AG04449 (cell line): ENCODE measurements at regions of chr22 and their contacts with region 1.

Region 1: GRCh38 chr22:39003165-39003638 is 10.9 kb upstream of the APOBEC3C start:
- DNase-seq: peak; percentile 26
- H3K4me3 ChIP-seq: no peak overlapping the region
- CTCF ChIP-seq: peak; percentile 74

Region 2: GRCh38 chr22:38973289-38974169 is 29.7 kb before region 1 on chr22:
- CTCF ChIA-PET with region 1: interaction called, 15 read pairs
- POLR2A ChIA-PET with region 1: no interaction called
- DNase-seq: no peak
- H3K4me3 ChIP-seq: no peak overlapping the region
- CTCF ChIP-seq: peak; percentile 75

Region 3: GRCh38 chr22:38981992-38982927 is 20.9 kb before region 1 on chr22 and contains the start of gene APOBEC3B:
- CTCF ChIA-PET with region 1: interaction called, 11 read pairs
- POLR2A ChIA-PET with region 1: no interaction called
- DNase-seq: peak; percentile 73
- H3K4me3 ChIP-seq: peak within 1 kb of the TSS; percentile 52
- CTCF ChIP-seq: no peak

Region 4: GRCh38 chr22:39117585-39118191 is 114.5 kb after region 1 on chr22:
- CTCF ChIA-PET with region 1: interaction called, 18 read pairs
- POLR2A ChIA-PET with region 1: no interaction called
- DNase-seq: no peak
- H3K4me3 ChIP-seq: no peak overlapping the region
- CTCF ChIP-seq: peak; percentile 38

Region 5: DNA sequence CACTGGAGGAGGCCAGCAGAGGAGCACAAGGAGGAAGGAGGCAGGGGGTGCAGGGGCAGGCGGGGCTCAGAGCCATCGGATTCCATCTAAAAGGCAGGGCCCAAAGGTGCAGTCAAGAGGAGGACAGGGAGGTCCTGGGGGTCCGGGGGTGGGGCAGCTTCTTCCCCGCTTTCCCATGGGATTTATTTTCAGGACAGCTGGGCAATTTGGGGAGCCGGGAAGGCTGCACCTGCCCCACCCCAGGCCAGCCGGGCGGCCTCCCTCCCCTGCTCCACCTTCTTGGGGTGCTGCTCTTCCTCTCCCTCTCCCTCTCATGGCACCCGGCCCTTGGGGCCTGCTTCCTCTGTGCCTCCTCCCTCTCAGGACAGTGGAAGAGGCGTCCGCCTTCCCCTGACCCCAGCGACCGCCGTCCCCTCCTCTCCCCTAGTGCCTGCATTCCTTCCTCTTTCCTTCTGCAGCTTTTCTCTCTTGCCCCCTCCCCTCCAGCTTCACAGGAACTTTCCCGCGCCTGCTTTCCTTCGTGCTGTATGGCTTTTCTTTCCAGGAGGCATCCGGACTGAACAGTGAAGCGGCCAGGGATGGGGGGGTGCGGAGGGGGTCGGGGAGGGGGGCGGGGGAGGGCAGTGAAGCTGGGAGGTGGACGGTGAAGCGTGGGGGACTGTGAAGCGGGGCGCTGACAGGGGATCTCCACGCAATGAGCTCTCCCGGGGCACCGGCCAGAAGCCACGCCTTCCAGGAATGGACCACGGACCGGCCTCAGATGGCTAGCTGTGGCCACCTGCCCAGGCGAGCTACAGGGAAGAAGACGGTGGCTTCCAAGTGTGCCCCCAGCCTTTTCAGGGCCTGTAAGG is 120.8 kb after region 1 on chr22:
- CTCF ChIA-PET with region 1: interaction called, 18 read pairs
- POLR2A ChIA-PET with region 1: no interaction called
- DNase-seq: no peak
- H3K4me3 ChIP-seq: no peak overlapping the region
- CTCF ChIP-seq: no peak

Region 6: DNA sequence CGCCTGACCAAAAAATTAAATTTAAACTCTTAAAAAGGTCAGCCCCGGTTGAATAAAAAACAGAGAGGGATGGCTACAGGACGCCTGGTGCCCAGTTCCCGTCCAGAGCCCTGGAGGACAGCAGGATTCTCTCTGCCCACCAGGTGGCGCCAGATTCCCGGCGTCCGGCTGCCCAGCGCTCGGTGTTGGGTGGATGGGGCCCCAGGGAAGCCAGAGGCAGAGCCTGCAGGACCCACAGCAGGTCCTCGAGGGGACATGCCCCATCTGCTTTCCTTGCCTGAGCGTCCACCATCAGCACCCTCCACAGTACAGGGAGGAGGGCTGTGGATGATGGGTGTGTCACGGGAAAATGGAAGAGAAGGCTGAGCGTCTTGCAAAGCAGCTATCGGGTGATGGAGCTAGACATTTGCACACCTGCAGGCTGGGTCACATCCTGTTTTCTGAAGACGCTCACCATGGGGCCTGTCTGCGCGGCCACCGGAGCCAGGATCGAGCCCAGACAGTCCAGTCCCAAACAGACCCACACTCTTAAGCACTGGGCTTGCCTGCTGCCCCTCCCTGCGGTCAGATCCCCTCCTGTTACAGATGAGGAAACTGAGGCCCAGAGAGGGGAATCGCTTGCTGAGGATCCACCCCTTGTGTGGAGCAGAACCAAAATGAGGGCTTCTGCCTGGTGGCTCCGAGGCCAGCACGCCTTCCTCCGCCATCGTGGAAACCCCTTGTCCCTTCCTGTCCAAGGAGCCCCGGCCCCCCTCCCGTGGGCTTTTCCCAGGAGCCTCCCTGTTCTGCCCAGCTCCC is 167.8 kb after region 1 on chr22:
- CTCF ChIA-PET with region 1: no interaction called
- POLR2A ChIA-PET with region 1: no interaction called
- DNase-seq: no peak
- H3K4me3 ChIP-seq: no peak overlapping the region
- CTCF ChIP-seq: peak; percentile 95